ENCODE measurements at regions of chr2 and their contacts with region 1.

Region 1: DNA sequence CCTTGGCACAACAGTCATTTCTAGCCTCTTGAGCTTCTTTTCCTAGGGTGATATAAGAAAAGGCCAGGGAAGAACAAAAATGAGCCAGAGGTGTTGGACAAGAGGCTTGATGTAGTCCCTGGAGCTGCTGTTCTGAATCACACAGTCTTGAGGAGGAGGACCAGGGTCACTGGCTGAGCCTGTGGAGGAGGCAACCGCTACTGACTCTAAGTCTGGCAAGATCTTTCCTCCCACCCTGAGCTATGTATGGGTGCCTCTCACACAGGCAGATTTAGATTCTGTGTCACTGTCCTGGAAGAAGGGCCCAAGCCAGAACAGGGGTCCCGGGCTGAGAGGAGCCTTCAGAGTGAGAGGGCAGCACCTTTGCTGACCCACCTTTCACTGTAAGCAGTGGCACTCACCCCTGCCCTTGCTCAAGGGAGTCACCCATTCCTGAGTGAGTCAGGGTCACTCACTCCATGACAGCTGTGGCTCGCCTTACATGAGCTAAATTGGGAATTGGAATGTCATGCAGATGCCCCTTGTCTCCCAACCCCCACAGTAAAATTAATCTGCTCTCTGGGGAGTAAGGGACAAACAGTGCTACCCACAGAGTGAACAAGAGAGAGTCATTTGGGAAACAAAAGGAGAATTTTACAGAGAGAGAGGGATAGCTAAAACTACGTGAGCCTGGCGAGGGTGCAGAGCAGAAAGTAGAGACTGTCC is at the start of gene TRIM54:
- DNase-seq: no peak
- ATAC-seq: no peak
- H3K4me3 ChIP-seq: no peak within 1 kb of the TSS
- H3K4me3 Mint-ChIP-seq: no peak within 1 kb of the TSS
- H3K27ac ChIP-seq: no peak within 1 kb of the TSS
- H3K27ac Mint-ChIP-seq: no peak within 1 kb of the TSS
- H3K4me1 ChIP-seq: no peaks in the 10 kb centered on the region
- H3K4me1 Mint-ChIP-seq: no peaks in the 10 kb centered on the region
- H3K27me3 ChIP-seq: peaks cover 0 to 6% of the 10 kb centered on the region in 2 experiments
- H3K27me3 Mint-ChIP-seq: peaks cover 37% of the 10 kb centered on the region
- CTCF ChIP-seq: no peak
- total RNA-seq, gene TRIM54: not detected

Region 2: GRCh38 chr2:26712486-26713465 is 569.2 kb before region 1 on chr2:
- CTCF ChIA-PET with region 1: no interaction called
- POLR2A ChIA-PET with region 1: no interaction called
- intact Hi-C with region 1: no loop called
- DNase-seq: no peak
- ATAC-seq: no peak
- H3K4me3 ChIP-seq: no peak overlapping the region
- H3K4me3 Mint-ChIP-seq: no peak overlapping the region
- H3K27ac ChIP-seq: no peak overlapping the region
- H3K27ac Mint-ChIP-seq: no peak overlapping the region
- H3K4me1 ChIP-seq: no peaks in the 10 kb centered on the region
- H3K4me1 Mint-ChIP-seq: no peaks in the 10 kb centered on the region
- H3K27me3 ChIP-seq: no peaks in the 10 kb centered on the region
- H3K27me3 Mint-ChIP-seq: no peaks in the 10 kb centered on the region
- CTCF ChIP-seq: no peak

Region 3: DNA sequence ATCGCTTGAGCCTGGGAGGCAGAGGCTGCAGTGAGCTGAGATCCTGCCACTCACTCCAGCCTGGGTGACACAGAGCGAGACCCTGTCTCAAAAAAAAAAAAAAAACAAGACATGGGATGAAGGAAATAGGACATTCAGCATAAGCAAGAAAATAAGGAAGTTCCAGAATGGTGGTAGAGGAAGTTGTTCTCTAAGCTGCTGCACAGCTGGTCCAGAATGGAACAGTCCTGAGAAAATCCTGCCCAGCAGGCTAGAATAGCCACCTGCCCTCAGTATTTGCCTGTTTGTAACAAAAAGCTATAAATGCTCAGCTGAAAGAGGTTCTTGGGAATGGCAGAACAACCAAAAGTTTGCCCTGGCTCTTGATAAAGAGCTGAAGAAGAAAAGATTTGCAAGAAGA is 322.7 kb before region 1 on chr2:
- CTCF ChIA-PET with region 1: interaction called, 23 read pairs
- POLR2A ChIA-PET with region 1: interaction called, 8 read pairs
- intact Hi-C with region 1: loop called (anchors 1 kb)
- DNase-seq: no peak
- ATAC-seq: no peak
- H3K4me3 ChIP-seq: no peak overlapping the region
- H3K4me3 Mint-ChIP-seq: no peak overlapping the region
- H3K27ac ChIP-seq: no peak overlapping the region
- H3K27ac Mint-ChIP-seq: no peak overlapping the region
- H3K4me1 ChIP-seq: peaks cover 5% of the 10 kb centered on the region
- H3K4me1 Mint-ChIP-seq: no peaks in the 10 kb centered on the region
- H3K27me3 ChIP-seq: peaks cover 7 to 10% of the 10 kb centered on the region in 2 experiments
- H3K27me3 Mint-ChIP-seq: peaks cover 54% of the 10 kb centered on the region
- CTCF ChIP-seq: no peak

Region 4: GRCh38 chr2:27174316-27175040 is 107.5 kb before region 1 on chr2:
- CTCF ChIA-PET with region 1: interaction called, 14 read pairs
- POLR2A ChIA-PET with region 1: no interaction called
- intact Hi-C with region 1: loop called (anchors 1 to 2 kb)
- DNase-seq: no peak
- ATAC-seq: no peak
- H3K4me3 ChIP-seq: no peak overlapping the region
- H3K4me3 Mint-ChIP-seq: no peak overlapping the region
- H3K27ac ChIP-seq: no peak overlapping the region
- H3K27ac Mint-ChIP-seq: no peak overlapping the region
- H3K4me1 ChIP-seq: peaks cover 8% of the 10 kb centered on the region
- H3K4me1 Mint-ChIP-seq: peaks cover 4% of the 10 kb centered on the region
- H3K27me3 ChIP-seq: peaks cover 3 to 7% of the 10 kb centered on the region in 2 experiments
- H3K27me3 Mint-ChIP-seq: peaks cover 44% of the 10 kb centered on the region
- CTCF ChIP-seq: no peak

Region 5: GRCh38 chr2:27264753-27265535 is 17.1 kb before region 1 on chr2:
- CTCF ChIA-PET with region 1: interaction called, 20 read pairs
- POLR2A ChIA-PET with region 1: interaction called, 5 read pairs
- intact Hi-C with region 1: loop called in 1 of 2 experiments (anchors 1 kb)
- DNase-seq: peak; percentile 32 to 89 (median 51)
- ATAC-seq: peak; percentile 63
- H3K4me3 ChIP-seq: peak overlapping the region; percentile 54
- H3K4me3 Mint-ChIP-seq: peak overlapping the region; percentile 73
- H3K27ac ChIP-seq: no peak overlapping the region
- H3K27ac Mint-ChIP-seq: no peak overlapping the region
- H3K4me1 ChIP-seq: peaks cover 42% of the 10 kb centered on the region
- H3K4me1 Mint-ChIP-seq: peaks cover 26% of the 10 kb centered on the region
- H3K27me3 ChIP-seq: peaks cover 48 to 55% of the 10 kb centered on the region in 2 experiments
- H3K27me3 Mint-ChIP-seq: peaks cover 39% of the 10 kb centered on the region
- CTCF ChIP-seq: peak; percentile 59